ENCODE measurements at regions of chr13 and their contacts with region 1.

Region 1: GRCh38 chr13:25249001-25249543 is 38.2 kb downstream of the MTMR6 start:
- DNase-seq: no peak
- ATAC-seq: no peak
- H3K4me3 Mint-ChIP-seq: no peak overlapping the region
- H3K27ac Mint-ChIP-seq: no peak overlapping the region
- H3K4me1 Mint-ChIP-seq: peaks cover 25% of the 10 kb centered on the region
- H3K27me3 Mint-ChIP-seq: no peaks in the 10 kb centered on the region
- CTCF ChIP-seq: no peak

Region 2: GRCh38 chr13:25085125-25085742 is 163.8 kb before region 1 on chr13:
- CTCF ChIA-PET with region 1: no interaction called
- POLR2A ChIA-PET with region 1: no interaction called
- intact Hi-C with region 1: loop called (anchors 2 kb)
- DNase-seq: no peak
- ATAC-seq: no peak
- H3K4me3 Mint-ChIP-seq: no peak overlapping the region
- H3K27ac Mint-ChIP-seq: no peak overlapping the region
- H3K4me1 Mint-ChIP-seq: peaks cover 3% of the 10 kb centered on the region
- H3K27me3 Mint-ChIP-seq: peaks cover 6% of the 10 kb centered on the region
- CTCF ChIP-seq: no peak

Region 3: GRCh38 chr13:25529425-25529824 is 280.4 kb after region 1 on chr13:
- CTCF ChIA-PET with region 1: no interaction called
- POLR2A ChIA-PET with region 1: no interaction called
- intact Hi-C with region 1: no loop called
- DNase-seq: no peak
- ATAC-seq: no peak
- H3K4me3 Mint-ChIP-seq: no peak overlapping the region
- H3K27ac Mint-ChIP-seq: no peak overlapping the region
- H3K4me1 Mint-ChIP-seq: no peaks in the 10 kb centered on the region
- H3K27me3 Mint-ChIP-seq: no peaks in the 10 kb centered on the region
- CTCF ChIP-seq: no peak